IMR-90 (cell line): ENCODE measurements at regions of chr19 and their contacts with region 1.

Region 1: DNA sequence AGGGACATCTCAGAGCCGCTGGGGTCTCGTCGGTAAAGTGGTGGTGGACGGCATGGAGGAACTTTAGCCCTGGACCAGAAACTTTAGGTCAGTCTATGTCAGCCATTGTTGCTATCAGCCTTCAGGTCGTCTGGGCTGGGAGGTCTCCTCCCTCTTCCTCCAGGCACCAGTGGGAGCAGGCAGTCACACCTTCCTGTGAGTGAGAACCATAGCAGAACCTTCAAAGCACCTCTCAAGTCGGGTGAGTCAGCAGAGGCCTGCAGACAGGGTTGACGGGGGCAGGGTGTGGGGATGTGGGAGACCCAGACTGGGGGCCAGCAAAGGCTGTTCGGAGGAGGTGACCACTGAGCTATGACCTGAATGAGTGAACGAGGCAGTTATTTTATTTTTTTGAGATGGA is 15.4 kb upstream of the SBNO2 start:
- DNase-seq: peak; percentile 35
- ATAC-seq: no peak
- H3K4me3 ChIP-seq: no peak overlapping the region
- H3K27ac ChIP-seq: no peak overlapping the region
- H3K4me1 ChIP-seq: 0 out of 2 replicates have a peak, but pooled peaks cover 2% of the 10 kb centered on the region
- H3K27me3 ChIP-seq: no peaks in the 10 kb centered on the region
- CTCF ChIP-seq: no peak
- POLR2A ChIP-seq: no peak
- RAD21 ChIP-seq: no peak

Region 2: GRCh38 chr19:947265-948036 is 242.0 kb before region 1 on chr19:
- CTCF ChIA-PET with region 1: no interaction called
- POLR2A ChIA-PET with region 1: no interaction called
- dilution Hi-C with region 1: no loop called
- in situ Hi-C with region 1: no loop called
- intact Hi-C with region 1: no loop called
- DNase-seq: no peak
- ATAC-seq: no peak
- H3K4me3 ChIP-seq: no peak overlapping the region
- H3K27ac ChIP-seq: no peak overlapping the region
- H3K4me1 ChIP-seq: peaks cover 9% of the 10 kb centered on the region
- H3K27me3 ChIP-seq: no peaks in the 10 kb centered on the region
- CTCF ChIP-seq: no peak
- POLR2A ChIP-seq: no peak
- RAD21 ChIP-seq: no peak

Region 3: DNA sequence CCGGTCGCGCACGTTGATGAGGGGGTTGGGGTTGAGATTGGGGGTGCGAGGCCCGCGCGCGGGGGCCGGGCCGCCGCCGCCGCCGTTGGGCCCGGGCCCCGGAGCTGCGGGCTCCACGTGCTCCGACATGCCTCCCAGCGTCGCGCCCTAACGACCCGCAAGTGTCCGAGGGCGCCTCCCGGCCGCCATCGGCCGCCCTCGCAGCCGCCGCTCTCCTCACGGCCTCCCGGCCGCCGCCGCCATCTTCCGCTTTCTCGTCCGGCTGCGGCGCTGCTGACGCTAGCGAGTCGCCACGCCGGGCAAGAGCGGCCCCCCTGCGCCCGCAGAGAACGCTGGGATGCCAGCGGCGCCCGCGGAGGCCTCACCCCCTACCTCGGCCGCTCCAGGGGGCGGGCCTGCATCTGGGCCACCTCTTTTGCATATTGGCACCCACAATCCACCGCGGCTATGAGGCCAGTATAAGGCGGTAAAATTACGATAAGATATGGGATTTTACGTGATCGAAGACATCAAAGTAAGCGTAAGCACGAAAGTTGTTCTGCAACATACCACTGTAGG is 168.5 kb before region 1 on chr19 and contains the start of gene TMEM259:
- CTCF ChIA-PET with region 1: no interaction called
- POLR2A ChIA-PET with region 1: interaction called, 11 read pairs
- dilution Hi-C with region 1: no loop called
- in situ Hi-C with region 1: no loop called
- intact Hi-C with region 1: no loop called
- DNase-seq: peak; percentile 96
- ATAC-seq: peak; percentile 93
- H3K4me3 ChIP-seq: peak within 1 kb of the TSS; percentile 66
- H3K27ac ChIP-seq: peak within 1 kb of the TSS; percentile 66
- H3K4me1 ChIP-seq: peaks cover 32% of the 10 kb centered on the region
- H3K27me3 ChIP-seq: no peaks in the 10 kb centered on the region
- CTCF ChIP-seq: no peak
- POLR2A ChIP-seq: no peak; the same call in 1 of the 2 replicates
- RAD21 ChIP-seq: no peak
- total RNA-seq, gene TMEM259: 22.6 and 26.4 TPM in 2 replicates

Region 4: GRCh38 chr19:1173845-1174809 is 15.3 kb before region 1 on chr19 and contains the start of gene SBNO2:
- CTCF ChIA-PET with region 1: interaction called, 4 read pairs
- POLR2A ChIA-PET with region 1: interaction called, 10 read pairs
- dilution Hi-C with region 1: no loop called
- in situ Hi-C with region 1: no loop called
- intact Hi-C with region 1: no loop called
- DNase-seq: peak; percentile 80
- ATAC-seq: peak; percentile 56
- H3K4me3 ChIP-seq: peak within 1 kb of the TSS; percentile 92
- H3K27ac ChIP-seq: peak within 1 kb of the TSS; percentile 99
- H3K4me1 ChIP-seq: peaks cover 37% of the 10 kb centered on the region
- H3K27me3 ChIP-seq: no peaks in the 10 kb centered on the region
- CTCF ChIP-seq: no peak
- POLR2A ChIP-seq: peak; percentile 90
- RAD21 ChIP-seq: no peak
- total RNA-seq, gene SBNO2: 13.4 and 13.6 TPM in 2 replicates